PC-9 (cell line): ENCODE measurements at regions of chr21 and their contacts with region 1.

Region 1: GRCh38 chr21:32597205-32597604 is 11.9 kb upstream of the TCP10L start:
- DNase-seq: peak in 1 of 2 experiments; percentile 34
- H3K4me3 ChIP-seq: no peak overlapping the region
- H3K27ac ChIP-seq: no peak overlapping the region
- H3K4me1 ChIP-seq: no peaks in the 10 kb centered on the region
- H3K27me3 ChIP-seq: no peaks in the 10 kb centered on the region
- CTCF ChIP-seq: no peak

Region 2: GRCh38 chr21:32186804-32187203 is 410.4 kb before region 1 on chr21:
- CTCF ChIA-PET with region 1: interaction called, 13 read pairs
- POLR2A ChIA-PET with region 1: no interaction called
- intact Hi-C with region 1: no loop called
- DNase-seq: no peak
- H3K4me3 ChIP-seq: no peak overlapping the region
- H3K27ac ChIP-seq: no peak overlapping the region
- H3K4me1 ChIP-seq: no peaks in the 10 kb centered on the region
- H3K27me3 ChIP-seq: peaks cover 49% of the 10 kb centered on the region
- CTCF ChIP-seq: no peak

Region 3: DNA sequence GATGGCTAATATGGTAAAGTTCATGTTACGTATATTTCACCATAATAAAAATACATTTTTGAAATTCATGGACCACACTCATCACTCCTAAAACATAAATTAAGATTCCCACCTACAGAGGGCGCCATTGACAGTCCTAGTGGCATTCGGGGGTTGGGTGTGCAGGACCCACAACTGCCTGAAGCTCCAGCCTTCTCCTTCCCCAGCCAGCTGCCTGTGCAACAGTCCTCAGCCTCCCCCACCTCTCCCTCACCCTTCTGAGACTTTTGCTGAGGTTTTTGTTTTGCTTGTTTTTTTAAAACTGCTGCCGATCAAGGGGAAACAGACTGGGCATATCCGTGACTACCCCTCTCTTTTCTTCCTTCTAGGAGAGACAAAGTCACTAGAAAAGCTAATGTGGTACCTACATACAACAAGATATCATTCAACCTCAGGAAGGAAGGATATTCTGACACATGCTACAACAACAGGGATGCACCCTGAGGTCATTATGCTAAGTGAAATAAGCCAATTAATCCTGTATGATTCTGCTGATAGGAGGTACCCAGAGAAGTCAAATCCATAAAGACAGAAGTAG is 193.9 kb before region 1 on chr21:
- CTCF ChIA-PET with region 1: interaction called, 23 read pairs
- POLR2A ChIA-PET with region 1: no interaction called
- intact Hi-C with region 1: loop called (anchors 1 kb)
- DNase-seq: peak in 1 of 2 experiments; percentile 36
- H3K4me3 ChIP-seq: no peak overlapping the region
- H3K27ac ChIP-seq: no peak overlapping the region
- H3K4me1 ChIP-seq: no peaks in the 10 kb centered on the region
- H3K27me3 ChIP-seq: no peaks in the 10 kb centered on the region
- CTCF ChIP-seq: peak; percentile 65

Region 4: DNA sequence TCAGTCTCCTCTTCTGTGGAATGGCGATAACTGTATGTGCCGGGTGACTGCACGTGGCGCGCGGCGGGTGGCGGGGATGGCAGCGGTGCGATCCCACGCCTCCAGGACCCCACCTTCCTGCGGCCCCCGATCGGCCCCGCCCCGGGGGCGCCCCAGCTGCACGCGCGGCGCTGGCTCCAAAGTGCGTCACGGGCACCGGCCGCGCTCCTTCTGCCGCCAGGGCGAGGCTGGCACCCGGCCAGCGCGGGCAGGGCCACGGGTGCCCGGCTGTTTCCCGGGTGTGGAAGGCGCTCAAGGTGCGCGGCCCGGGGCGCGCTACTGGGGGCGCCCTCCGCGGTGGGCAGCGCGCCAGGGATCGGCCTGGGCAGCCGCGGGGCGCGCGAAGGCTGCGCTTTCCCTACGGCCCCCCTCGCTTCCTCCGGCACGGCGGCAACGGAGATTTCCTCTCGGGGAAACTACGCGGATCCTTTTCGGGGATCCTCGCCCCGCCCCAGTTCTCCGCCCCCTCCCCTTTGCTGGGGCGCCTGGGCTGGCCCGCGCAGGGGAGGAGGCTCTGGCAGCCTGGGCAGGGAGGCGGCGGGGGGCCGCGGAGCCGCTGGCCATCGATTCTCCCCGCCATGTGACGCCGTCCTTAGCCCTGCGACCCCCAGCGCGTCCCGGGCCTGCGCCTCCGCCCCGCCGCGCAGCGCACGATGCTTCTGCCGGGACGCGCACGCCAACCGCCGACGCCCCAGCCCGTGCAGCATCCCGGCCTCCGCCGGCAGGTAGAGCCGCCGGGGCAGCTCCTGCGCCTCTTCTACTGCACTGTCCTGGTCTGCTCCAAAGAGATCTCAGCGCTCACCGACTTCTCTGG is 184.8 kb before region 1 on chr21 and contains the start of gene EVA1C:
- CTCF ChIA-PET with region 1: no interaction called
- POLR2A ChIA-PET with region 1: interaction called, 5 read pairs
- intact Hi-C with region 1: loop called (anchors 1 kb)
- DNase-seq: peak in 1 of 2 experiments; percentile 45
- H3K4me3 ChIP-seq: peak within 1 kb of the TSS; percentile 51
- H3K27ac ChIP-seq: no peak within 1 kb of the TSS
- H3K4me1 ChIP-seq: no peaks in the 10 kb centered on the region; the same call in 1 of the 2 replicates
- H3K27me3 ChIP-seq: peaks cover 32% of the 10 kb centered on the region; the same call in 1 of the 2 replicates
- CTCF ChIP-seq: no peak
- total RNA-seq, gene EVA1C: 3.0 and 3.1 TPM in 2 replicates

Region 5: DNA sequence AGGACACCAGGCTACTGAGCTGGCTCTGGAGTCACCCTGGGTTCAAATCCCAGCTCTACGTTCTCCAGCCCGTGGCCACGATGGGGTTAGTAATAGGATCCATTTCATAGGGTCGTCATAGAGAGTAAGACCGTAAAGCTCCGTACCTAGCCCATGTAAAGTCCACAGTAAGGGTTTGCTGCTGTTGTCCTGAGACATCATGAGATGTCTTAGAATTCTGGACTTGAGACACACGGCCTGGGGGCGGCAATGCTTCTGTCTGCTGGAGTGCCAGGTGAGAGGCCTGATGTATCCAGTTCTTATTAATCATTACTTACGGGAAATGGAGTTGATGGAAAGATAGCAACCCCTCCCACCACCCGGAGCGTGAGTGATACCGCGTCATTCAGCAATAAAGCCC is 15.5 kb before region 1 on chr21:
- CTCF ChIA-PET with region 1: no interaction called
- POLR2A ChIA-PET with region 1: no interaction called
- intact Hi-C with region 1: no loop called
- DNase-seq: no peak
- H3K4me3 ChIP-seq: no peak overlapping the region
- H3K27ac ChIP-seq: no peak overlapping the region
- H3K4me1 ChIP-seq: no peaks in the 10 kb centered on the region
- H3K27me3 ChIP-seq: peaks cover 31% of the 10 kb centered on the region
- CTCF ChIP-seq: no peak